ENCODE measurements at regions of chr7 and their contacts with region 1.

Region 1: DNA sequence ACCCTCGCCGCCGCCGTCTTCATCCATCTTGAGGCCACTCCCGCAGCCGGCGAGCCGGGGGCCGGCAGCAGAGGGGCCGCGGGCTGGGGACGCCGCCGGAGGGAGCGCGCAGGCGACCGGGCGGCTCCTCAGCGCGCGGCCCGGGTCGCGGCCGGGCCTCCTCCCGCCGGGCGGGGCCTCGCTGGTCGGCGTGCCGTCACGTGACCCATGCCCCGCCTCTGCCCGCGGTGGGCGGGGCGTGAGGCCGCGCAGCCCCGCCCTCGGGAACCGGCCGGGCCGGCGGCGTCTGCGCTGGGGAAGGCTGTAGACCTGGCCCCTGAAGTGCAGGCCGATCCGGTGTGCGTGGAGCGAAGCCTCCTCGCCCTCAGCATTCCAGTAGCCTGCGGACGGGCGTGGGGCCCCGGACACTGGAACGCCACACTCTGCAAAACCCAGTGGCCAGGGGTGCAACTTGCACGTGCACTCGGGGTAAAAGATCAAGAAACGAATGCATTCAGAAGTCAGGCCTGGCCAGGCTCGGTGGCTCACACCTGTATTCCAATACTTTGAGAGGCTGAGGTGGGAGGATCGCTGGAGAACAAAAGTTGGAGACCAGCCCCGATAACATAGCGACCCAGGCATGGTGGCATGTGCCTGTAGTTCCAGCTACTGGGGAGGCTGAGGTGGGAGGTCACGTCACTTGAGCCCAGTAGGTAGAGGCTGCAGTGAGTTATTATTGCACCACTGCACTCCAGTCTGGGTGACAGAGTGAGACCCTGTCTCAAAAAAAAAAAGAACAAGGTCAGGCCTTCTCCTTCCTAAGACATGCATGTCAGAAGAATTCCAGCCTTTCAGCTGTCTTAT is at the start of gene CYTH3:
- DNase-seq: peak; percentile 80
- H3K4me3 ChIP-seq: peak within 1 kb of the TSS; percentile 95
- H3K27ac ChIP-seq: peak within 1 kb of the TSS; percentile 86
- H3K4me1 ChIP-seq: peaks cover 49% of the 10 kb centered on the region
- H3K27me3 ChIP-seq: no peaks in the 10 kb centered on the region
- CTCF ChIP-seq: no peak
- total RNA-seq, gene CYTH3: 25.5 TPM

Region 2: GRCh38 chr7:5629941-5630340 is 642.8 kb before region 1 on chr7:
- intact Hi-C with region 1: no loop called
- DNase-seq: no peak
- H3K4me3 ChIP-seq: no peak overlapping the region
- H3K27ac ChIP-seq: no peak overlapping the region
- H3K4me1 ChIP-seq: peaks cover 50% of the 10 kb centered on the region
- H3K27me3 ChIP-seq: no peaks in the 10 kb centered on the region
- CTCF ChIP-seq: no peak

Region 3: GRCh38 chr7:6167004-6167551 is 105.6 kb before region 1 on chr7:
- intact Hi-C with region 1: loop called (anchors 5 kb)
- DNase-seq: peak; percentile 62
- H3K4me3 ChIP-seq: peak overlapping the region; percentile 13
- H3K27ac ChIP-seq: peak overlapping the region; percentile 74
- H3K4me1 ChIP-seq: peaks cover 92% of the 10 kb centered on the region
- H3K27me3 ChIP-seq: no peaks in the 10 kb centered on the region
- CTCF ChIP-seq: no peak